ENCODE measurements at regions of chr5 and their contacts with region 1.

Region 1: DNA sequence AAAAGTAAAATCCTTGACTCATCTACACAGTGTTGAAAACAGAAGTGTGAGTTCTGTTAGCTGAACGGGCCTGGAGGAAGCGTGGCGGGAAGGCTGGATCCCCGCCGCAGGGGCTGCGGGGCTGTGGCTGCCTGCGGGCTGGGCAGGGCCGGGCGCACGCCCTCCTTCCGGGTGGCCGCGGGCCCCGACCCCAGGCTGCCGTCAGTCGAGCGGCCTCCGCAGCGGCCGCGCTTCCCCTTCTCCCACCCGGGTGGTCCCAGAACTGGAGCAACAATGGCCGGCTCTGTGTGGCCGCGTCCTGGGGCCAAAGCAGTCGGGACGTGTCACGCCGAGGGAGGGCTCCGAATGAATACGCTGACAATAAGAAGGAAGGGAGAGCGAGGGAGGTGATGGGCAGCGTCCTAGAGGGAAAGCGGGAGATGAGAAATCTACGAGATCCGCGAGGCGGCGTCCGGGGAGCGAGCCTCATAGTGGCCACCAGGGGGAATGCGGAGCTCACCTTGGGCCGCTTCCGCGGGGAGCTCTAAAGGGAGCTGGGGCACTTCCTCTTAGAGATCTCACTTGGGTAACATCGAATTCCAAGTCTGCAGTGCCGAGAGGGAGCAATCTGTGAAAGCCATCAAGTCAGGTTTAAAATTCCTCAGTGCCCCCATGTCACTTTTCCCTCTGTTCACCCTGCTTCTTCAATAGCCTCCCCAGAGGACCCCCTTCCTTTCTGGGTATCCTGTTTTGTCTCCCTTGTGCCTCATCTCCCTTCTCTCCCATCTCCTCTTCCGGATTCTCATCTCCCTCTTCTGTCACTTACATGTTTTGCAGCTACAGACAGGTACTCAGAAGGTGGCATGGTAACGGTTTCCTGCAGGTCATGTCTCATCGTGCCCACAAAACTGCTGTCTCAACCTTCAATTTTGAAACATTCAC is 83.9 kb downstream of the SLC1A3 start:
- DNase-seq: peak; percentile 69 to 97
- H3K4me3 ChIP-seq: peak overlapping the region; percentile 43
- CTCF ChIP-seq: peak in 1 of 3 donors; percentile 46
- POLR2A ChIP-seq: no peak

Region 2: DNA sequence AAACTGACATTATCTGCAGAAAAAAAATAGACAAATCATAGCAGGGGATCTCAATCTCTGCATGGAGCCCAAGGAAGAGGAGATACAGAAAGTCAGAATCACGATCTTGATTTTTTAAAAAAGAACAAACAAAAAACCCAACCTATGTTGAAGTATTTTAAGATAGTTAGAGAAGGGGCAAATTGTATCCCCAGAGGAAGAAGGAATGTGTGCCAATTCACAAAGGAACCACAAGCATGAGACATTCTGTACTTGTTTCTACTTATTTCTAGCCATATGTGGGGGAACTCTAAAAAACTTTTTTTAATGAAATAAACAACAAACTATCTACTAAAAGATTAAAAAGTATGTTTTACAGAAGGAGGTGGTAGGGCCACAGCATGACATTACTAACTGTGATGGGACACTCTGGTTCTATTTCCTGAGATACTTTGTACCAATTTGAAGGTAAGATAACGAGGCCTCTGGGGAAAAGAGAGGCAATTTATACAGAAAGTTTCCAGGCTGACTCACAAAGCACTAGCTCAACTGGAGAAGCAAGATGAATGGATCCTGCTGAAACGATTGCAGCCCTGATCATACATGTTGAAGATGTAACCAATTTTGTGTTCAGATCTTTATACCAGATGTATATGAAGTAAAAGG is 411.1 kb before region 1 on chr5:
- intact Hi-C with region 1: loop called (anchors 10 kb)
- DNase-seq: no peak
- H3K4me3 ChIP-seq: no peak overlapping the region
- CTCF ChIP-seq: no peak
- POLR2A ChIP-seq: no peak

Region 3: GRCh38 chr5:36414869-36415282 is 275.4 kb before region 1 on chr5:
- intact Hi-C with region 1: loop called (anchors 2 kb)
- DNase-seq: no peak
- H3K4me3 ChIP-seq: no peak overlapping the region
- CTCF ChIP-seq: no peak
- POLR2A ChIP-seq: no peak

Region 4: DNA sequence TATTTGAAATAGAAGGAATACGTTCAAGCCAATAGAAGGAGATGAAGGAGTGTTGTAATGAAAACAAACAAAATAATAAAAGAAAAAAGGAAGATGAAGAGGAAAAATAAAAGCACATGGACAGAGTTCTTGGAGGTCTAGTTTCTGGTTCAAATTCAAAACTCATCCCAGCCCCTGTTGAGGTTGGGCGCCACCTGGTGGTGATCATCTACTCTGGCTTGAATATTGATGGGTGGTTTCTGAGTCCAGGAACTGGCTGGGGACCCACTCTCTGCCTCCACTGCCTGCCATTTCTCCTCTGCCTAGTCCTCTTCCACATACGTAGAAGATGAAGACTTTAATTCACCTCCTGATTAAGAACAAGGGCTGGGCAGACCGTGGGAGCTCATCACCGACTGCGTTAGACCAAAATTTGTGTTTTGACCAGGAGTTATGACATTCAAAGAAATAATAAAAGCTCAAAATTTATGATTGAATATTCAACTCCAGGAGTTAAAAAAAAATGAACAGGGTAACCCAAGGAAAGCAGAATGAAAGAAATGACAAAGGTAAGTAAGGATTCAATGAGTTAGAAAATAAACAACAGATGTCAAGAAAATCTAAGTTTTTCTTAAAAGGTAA is 182.9 kb before region 1 on chr5:
- intact Hi-C with region 1: loop called (anchors 5 kb)
- DNase-seq: peak; percentile 74 to 96
- H3K4me3 ChIP-seq: no peak overlapping the region
- CTCF ChIP-seq: peak in 1 of 3 donors; percentile 38
- POLR2A ChIP-seq: no peak

Region 5: DNA sequence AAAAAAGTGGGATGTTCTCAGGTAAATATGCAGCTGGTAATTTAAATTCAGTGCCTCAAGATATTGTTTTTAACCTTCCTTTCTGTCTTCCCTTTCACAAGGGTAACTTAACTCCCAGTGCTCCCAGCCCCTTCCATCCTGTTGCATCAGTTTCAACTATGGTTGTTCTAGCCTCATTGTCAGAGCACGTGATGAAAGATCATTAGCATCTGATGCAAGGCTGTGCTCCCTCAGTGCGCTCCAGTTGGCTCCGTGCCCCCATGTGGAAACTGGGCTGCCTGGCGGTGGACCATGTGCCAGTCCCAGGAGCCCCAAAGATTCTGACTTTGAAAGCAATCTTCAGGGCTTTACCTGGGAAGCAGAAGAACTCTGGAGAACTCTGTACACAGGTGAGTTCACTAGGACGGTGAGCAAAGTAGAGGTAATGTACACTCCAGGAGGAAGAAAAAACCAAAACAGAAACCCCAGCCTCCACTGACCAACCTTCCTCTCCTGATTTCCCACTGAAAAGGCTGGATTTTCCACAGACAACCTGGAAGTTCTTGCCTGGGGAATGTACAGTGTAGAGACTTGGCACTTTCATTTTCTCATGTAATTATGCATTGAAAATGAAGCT is 13.1 kb after region 1 on chr5:
- intact Hi-C with region 1: no loop called
- DNase-seq: peak; percentile 26 to 91
- H3K4me3 ChIP-seq: no peak overlapping the region
- CTCF ChIP-seq: no peak
- POLR2A ChIP-seq: no peak